ENCODE measurements at regions of chr12 and their contacts with region 1.

Region 1: GRCh38 chr12:54360717-54361456 is 3.4 kb downstream of the GPR84 start:
- DNase-seq: no peak
- H3K4me3 ChIP-seq: no peak overlapping the region
- H3K27ac ChIP-seq: peak overlapping the region; percentile 88 to 92 (median 90)
- H3K4me1 ChIP-seq: peaks cover 20 to 44% (median 42%) of the 10 kb centered on the region in 4 donors
- H3K27me3 ChIP-seq: no peaks in the 10 kb centered on the region
- CTCF ChIP-seq: peak; percentile 77 to 87 (median 83)
- EP300 ChIP-seq: no peak
- POLR2A ChIP-seq: no peak

Region 2: GRCh38 chr12:54159140-54159539 is 201.7 kb before region 1 on chr12:
- intact Hi-C with region 1: no loop called
- DNase-seq: no peak
- H3K4me3 ChIP-seq: no peak overlapping the region
- H3K27ac ChIP-seq: no peak overlapping the region
- H3K4me1 ChIP-seq: peaks cover 0 to 12% (median 11%) of the 10 kb centered on the region in 4 donors
- H3K27me3 ChIP-seq: peaks cover 0 to 4% (median 0%) of the 10 kb centered on the region in 4 donors
- CTCF ChIP-seq: no peak
- EP300 ChIP-seq: no peak
- POLR2A ChIP-seq: no peak

Region 3: GRCh38 chr12:54214553-54215406 is 146.1 kb before region 1 on chr12:
- intact Hi-C with region 1: loop called (anchors 5 kb)
- DNase-seq: peak; percentile 94
- H3K4me3 ChIP-seq: peak overlapping the region in 2 of 4 donors; percentile 8 to 40
- H3K27ac ChIP-seq: no peak overlapping the region
- H3K4me1 ChIP-seq: peaks cover 25 to 41% (median 33%) of the 10 kb centered on the region in 4 donors
- H3K27me3 ChIP-seq: peaks cover 0 to 87% (median 26%) of the 10 kb centered on the region in 4 donors
- CTCF ChIP-seq: peak; percentile 85 to 95 (median 89)
- EP300 ChIP-seq: no peak
- POLR2A ChIP-seq: no peak

Region 4: GRCh38 chr12:54251667-54252284 is 109.1 kb before region 1 on chr12:
- intact Hi-C with region 1: loop called (anchors 5 kb)
- DNase-seq: no peak
- H3K4me3 ChIP-seq: no peak overlapping the region
- H3K27ac ChIP-seq: no peak overlapping the region
- H3K4me1 ChIP-seq: peaks cover 12 to 28% (median 22%) of the 10 kb centered on the region in 4 donors
- H3K27me3 ChIP-seq: no peaks in the 10 kb centered on the region
- CTCF ChIP-seq: peak; percentile 65 to 71 (median 66)
- EP300 ChIP-seq: no peak
- POLR2A ChIP-seq: no peak

Region 5: DNA sequence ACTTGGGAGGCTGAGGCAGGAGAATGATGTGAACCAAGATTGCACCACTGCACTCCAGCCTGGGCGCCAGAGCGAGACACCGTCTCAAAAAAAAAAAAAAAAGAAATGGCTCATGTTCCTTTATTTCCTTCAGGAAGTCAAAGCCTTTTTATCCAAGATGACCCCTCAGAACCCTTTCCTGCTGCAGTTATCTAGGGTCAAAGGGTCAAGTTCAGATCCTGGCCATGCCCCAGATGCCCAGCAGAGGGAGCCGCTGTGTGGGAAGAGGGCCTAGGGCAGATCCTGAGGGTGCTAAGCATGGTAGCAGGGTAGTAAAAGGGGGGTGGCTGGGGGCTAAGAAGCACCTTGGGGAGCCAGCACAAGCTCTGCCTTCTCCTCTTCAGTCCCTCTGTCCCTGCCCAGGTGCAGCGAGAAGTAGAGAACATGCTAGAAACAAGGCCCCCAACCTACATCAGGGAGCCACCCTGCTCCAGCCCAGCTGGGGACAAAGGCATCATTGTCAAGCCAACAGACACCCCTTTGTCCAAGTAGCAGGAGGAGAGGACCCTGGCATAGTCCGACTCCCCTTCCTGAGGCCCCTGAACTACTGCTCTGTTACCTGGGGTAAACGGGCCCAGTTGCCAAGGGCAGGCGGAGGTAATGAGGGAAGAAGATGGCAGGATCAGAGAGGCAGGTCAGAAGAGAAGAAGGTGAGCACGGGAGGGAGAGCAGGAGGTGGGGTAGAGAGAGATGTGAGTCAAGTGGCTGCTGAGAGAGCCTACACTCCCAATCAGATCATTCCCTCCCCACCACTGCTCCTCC is 66.5 kb before region 1 on chr12:
- intact Hi-C with region 1: loop called (anchors 2 kb)
- DNase-seq: no peak
- H3K4me3 ChIP-seq: no peak overlapping the region
- H3K27ac ChIP-seq: peak overlapping the region in 1 of 4 donors; percentile 4
- H3K4me1 ChIP-seq: no peaks in the 10 kb centered on the region
- H3K27me3 ChIP-seq: peaks cover 0 to 27% (median 1%) of the 10 kb centered on the region in 4 donors
- CTCF ChIP-seq: peak; percentile 59 to 77 (median 74)
- EP300 ChIP-seq: no peak
- POLR2A ChIP-seq: no peak

Region 6: GRCh38 chr12:54324617-54325441 is 36.1 kb before region 1 on chr12 and contains the start of gene COPZ1:
- intact Hi-C with region 1: loop called (anchors 5 kb)
- DNase-seq: peak; percentile 99
- H3K4me3 ChIP-seq: peak within 1 kb of the TSS; percentile 58 to 79 (median 66)
- H3K27ac ChIP-seq: peak within 1 kb of the TSS; percentile 78 to 90 (median 85)
- H3K4me1 ChIP-seq: peaks cover 25 to 53% (median 50%) of the 10 kb centered on the region in 4 donors
- H3K27me3 ChIP-seq: no peaks in the 10 kb centered on the region
- CTCF ChIP-seq: peak; percentile 59 to 67 (median 61)
- EP300 ChIP-seq: no peak
- POLR2A ChIP-seq: peak; percentile 46
- total RNA-seq, gene COPZ1: 41.1 to 61.9 (median 48.5) TPM

Region 7: DNA sequence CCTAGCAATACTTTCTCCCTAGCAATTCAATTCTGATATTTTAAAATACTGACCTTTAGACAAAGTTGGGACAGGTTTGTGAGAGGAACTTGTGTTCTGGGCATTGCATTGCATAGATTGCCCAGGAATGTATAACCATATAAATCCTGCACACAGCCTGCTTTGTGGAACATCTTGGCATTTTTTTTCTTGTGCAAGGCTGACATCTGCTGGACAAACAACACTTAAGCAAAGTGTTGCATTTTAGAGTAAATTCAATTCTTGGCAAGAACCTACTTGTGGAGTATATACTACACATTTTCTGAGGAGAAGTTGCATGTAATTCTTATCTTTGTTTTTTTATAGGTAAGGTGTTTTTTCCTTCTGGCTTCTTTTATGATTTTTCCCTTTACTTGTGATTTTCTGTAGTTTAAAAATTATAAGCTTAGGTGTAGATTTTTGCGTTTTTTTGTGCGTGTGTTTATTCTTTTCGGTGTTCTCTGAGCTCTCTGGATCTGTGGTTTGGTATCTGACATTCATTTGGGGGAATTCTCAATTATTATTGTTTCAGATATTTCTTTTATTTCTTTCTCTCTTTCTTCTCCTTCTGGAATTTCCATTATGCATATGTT is 597.3 kb after region 1 on chr12:
- intact Hi-C with region 1: no loop called
- DNase-seq: no peak
- H3K4me3 ChIP-seq: no peak overlapping the region
- H3K27ac ChIP-seq: no peak overlapping the region
- H3K4me1 ChIP-seq: no peaks in the 10 kb centered on the region
- H3K27me3 ChIP-seq: peaks cover 0 to 3% (median 0%) of the 10 kb centered on the region in 4 donors
- CTCF ChIP-seq: peak; percentile 62 to 67 (median 63)
- EP300 ChIP-seq: no peak
- POLR2A ChIP-seq: no peak